Left lung (tissue), 14 donors: ENCODE measurements at regions of chr10 and their contacts with region 1.

Region 1: DNA sequence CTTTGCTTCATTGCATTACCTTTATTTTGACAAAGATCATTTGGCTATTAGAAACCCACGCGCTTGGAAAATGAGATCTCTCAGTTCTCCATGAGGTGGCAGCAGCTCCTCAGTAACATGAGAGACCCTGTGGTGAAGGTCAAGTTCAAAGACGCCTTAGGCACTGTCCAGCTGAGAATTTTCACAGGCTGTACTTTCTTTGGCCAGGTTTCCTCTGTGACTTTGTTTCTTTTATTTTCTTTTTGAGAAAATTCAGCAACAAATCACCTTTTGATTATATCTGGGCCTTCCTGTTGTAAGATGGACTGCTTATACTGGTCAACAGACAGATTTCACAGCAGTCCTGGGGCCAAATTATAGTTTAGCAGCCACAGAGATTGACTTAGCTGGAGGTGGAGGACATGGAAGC is 54.5 kb downstream of the RAB18 start:
- DNase-seq: peak in 3 of 4 donors; percentile 37 to 56 (median 42)
- ATAC-seq: peak; percentile 95
- H3K4me3 ChIP-seq: no peak overlapping the region
- H3K27ac ChIP-seq: no peak overlapping the region
- H3K4me1 ChIP-seq: no peaks in the 10 kb centered on the region
- H3K27me3 ChIP-seq: no peaks in the 10 kb centered on the region
- CTCF ChIP-seq: peak; percentile 51 to 71

Region 2: GRCh38 chr10:27482984-27483956 is 75.3 kb before region 1 on chr10:
- intact Hi-C with region 1: no loop called
- DNase-seq: peak in 2 of 4 donors; percentile 15 to 45
- ATAC-seq: peak; percentile 94
- H3K4me3 ChIP-seq: no peak overlapping the region
- H3K27ac ChIP-seq: peak overlapping the region; percentile 35 to 55
- H3K4me1 ChIP-seq: peaks cover 0 to 12% of the 10 kb centered on the region in 2 donors
- H3K27me3 ChIP-seq: no peaks in the 10 kb centered on the region
- CTCF ChIP-seq: no peak

Region 3: DNA sequence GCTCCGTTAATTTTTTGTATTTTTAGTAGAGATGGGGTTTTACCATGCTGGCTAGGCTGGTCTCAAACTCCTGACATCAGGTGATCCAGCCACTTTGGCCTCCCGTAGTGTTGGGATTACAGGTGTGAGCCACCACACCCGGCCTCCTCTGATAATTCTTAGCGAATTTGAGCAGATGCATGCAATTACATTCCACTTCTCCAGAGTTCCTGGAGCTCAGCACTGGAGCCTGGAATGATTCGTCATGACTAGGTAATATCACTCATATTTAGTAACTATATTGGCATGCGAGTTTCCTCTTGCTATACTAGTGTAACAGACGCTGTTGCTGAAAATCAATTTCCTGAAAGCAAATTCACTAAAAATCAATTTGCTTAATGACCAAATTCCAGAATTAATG is 100.2 kb after region 1 on chr10:
- intact Hi-C with region 1: loop called in 1 of 2 experiments (anchors 10 kb)
- DNase-seq: no peak
- ATAC-seq: no peak
- H3K4me3 ChIP-seq: no peak overlapping the region
- H3K27ac ChIP-seq: no peak overlapping the region
- H3K4me1 ChIP-seq: peaks cover 0 to 16% of the 10 kb centered on the region in 2 donors
- H3K27me3 ChIP-seq: peaks cover 0 to 6% of the 10 kb centered on the region in 2 donors
- CTCF ChIP-seq: no peak